ENCODE measurements at regions of chr5 and their contacts with region 1.

Region 1: GRCh38 chr5:154038707-154039457 is at the starts of genes FAM114A2 and MFAP3:
- DNase-seq: peak; percentile 93
- H3K4me3 Mint-ChIP-seq: peak within 1 kb of the TSS; percentile 98
- H3K27ac Mint-ChIP-seq: peak within 1 kb of the TSS; percentile 93
- H3K4me1 Mint-ChIP-seq: peaks cover 47% of the 10 kb centered on the region
- H3K27me3 Mint-ChIP-seq: no peaks in the 10 kb centered on the region
- total RNA-seq, gene FAM114A2: 27.4 to 27.8 TPM
- total RNA-seq, gene MFAP3: 10.0 to 11.1 TPM

Region 2: DNA sequence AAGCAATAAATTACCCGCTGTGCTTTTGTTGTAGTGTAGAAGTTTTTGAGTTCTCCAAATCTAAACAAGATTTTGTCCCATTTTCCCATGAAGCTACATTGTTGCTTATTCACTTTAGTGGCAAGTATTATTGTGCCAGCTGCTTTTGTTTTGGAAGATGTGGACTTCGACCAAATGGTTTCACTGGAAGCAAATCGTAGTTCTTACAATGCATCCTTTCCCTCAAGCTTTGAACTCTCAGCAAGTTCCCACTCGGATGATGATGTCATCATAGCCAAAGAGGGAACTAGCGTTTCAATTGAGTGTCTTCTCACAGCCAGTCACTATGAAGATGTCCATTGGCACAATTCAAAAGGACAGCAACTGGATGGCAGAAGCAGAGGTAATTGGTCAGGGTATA is 10.8 kb after region 1 on chr5:
- CTCF ChIA-PET with region 1: interaction called, 5 read pairs
- POLR2A ChIA-PET with region 1: interaction called, 12 read pairs
- intact Hi-C with region 1: no loop called
- DNase-seq: no peak
- H3K4me3 Mint-ChIP-seq: no peak overlapping the region
- H3K27ac Mint-ChIP-seq: no peak overlapping the region
- H3K4me1 Mint-ChIP-seq: peaks cover 27% of the 10 kb centered on the region
- H3K27me3 Mint-ChIP-seq: no peaks in the 10 kb centered on the region

Region 3: DNA sequence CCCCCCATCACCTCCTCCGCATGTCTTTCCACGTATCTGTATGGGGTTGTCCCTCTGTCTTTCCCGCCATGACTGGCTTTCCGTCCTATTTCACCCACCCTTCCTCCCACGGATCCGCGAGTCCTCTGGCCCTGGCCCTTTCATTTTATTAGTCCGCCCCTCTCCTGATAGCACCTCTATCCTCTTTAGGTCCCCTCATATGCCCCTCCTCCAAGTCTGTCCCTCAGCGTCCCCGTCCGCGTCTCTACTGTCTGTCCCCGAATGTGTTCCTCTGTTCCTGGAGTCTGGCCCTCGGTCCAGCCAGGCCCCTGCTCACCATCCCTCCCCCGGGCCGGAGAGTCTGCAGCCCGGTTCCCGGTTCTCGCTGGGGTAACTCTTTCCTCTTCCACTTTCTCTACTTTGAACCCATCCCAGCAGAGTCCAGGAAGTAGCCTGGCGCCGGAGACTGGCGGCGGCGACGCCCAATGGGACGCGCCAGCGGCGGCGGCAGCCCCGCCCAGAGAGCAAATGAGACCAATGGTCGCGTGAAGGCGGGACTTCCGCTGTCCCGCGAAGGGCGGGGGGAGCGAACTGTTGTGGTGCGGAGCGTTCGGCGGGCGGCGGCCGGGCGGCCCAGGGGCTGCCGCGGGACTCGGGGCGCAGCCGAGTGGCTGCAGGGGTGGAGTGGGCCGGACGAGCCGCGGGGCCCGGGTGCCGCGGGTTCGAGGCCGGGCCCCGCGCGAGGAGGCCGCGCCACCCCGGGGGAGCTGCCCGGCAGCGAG is 406.7 kb after region 1 on chr5 and contains the start of gene SAP30L:
- CTCF ChIA-PET with region 1: no interaction called
- POLR2A ChIA-PET with region 1: no interaction called
- intact Hi-C with region 1: loop called (anchors 2 kb)
- DNase-seq: peak; percentile 97
- H3K4me3 Mint-ChIP-seq: peak within 1 kb of the TSS; percentile 99
- H3K27ac Mint-ChIP-seq: peak within 1 kb of the TSS; percentile 94
- H3K4me1 Mint-ChIP-seq: peaks cover 45% of the 10 kb centered on the region
- H3K27me3 Mint-ChIP-seq: no peaks in the 10 kb centered on the region
- total RNA-seq, gene SAP30L: 32.0 to 34.2 TPM

Measured in activated CD4-positive, alpha-beta memory T cell treated with anti-CD3 and anti-CD28 coated beads for 36 hours (primary cell).